Keratinocyte (primary cell): ENCODE measurements at regions of chr7 and their contacts with region 1.

Region 1: GRCh38 chr7:25789701-25790640 is 362.0 kb upstream of the NFE2L3 start:
- DNase-seq: no peak
- H3K4me3 ChIP-seq: no peak overlapping the region
- H3K27ac ChIP-seq: no peak overlapping the region
- H3K4me1 ChIP-seq: no peaks in the 10 kb centered on the region
- H3K27me3 ChIP-seq: no peaks in the 10 kb centered on the region
- CTCF ChIP-seq: no peak

Region 2: DNA sequence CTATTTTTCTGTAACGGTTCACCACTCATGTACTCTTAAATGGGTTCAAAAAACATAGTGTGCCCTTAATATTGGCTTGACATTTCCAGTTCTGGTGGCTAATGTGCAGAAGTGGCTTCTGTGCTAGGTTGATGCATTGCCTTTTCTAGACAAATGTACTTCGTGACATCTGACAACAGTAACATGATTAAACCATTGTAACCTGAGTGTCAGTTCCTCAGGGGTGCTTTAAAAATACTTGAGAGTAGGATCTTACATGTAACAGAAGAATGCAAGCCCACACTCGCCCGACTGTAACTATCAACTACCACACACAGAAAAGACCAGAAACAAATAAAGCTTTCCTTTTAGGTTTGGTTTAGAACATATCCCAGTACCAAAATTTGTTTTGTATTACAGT is 31.4 kb before region 1 on chr7:
- dilution Hi-C with region 1: loop called (anchors 5 kb)
- DNase-seq: no peak
- H3K4me3 ChIP-seq: peak overlapping the region in 1 of 3 experiments; percentile 3
- H3K27ac ChIP-seq: no peak overlapping the region
- H3K4me1 ChIP-seq: peaks cover 10% of the 10 kb centered on the region
- H3K27me3 ChIP-seq: no peaks in the 10 kb centered on the region
- CTCF ChIP-seq: no peak